Caco-2 (cell line): ENCODE measurements at regions of chr2 and their contacts with region 1.

Region 1: DNA sequence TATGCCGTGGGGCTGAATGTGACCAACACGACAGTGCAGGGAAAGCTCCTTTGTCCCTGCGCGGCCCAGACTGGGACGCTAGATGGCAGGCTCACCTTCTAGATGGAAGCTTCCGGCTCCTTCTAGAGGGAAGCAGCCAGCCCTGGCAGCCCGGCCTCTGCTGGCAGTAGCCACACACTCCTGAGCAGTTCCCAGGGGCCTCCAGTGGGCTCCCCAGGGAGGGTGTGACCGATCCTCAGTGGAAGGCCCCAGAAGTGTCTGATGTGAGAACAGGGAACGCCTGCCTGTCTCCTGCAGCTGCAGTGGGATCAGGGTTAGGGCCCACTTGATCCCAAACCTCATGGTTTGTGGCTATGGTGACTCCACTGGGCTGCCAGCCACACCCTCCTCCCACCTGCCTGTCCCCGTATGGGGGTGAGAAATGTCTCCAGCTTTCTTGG is 48.5 kb upstream of the LRPPRC start:
- DNase-seq: peak; percentile 91
- H3K4me3 ChIP-seq: no peak overlapping the region
- H3K4me3 Mint-ChIP-seq: no peak overlapping the region
- H3K27ac Mint-ChIP-seq: no peak overlapping the region
- H3K4me1 ChIP-seq: no peaks in the 10 kb centered on the region
- H3K4me1 Mint-ChIP-seq: no peaks in the 10 kb centered on the region
- H3K27me3 ChIP-seq: no peaks in the 10 kb centered on the region
- H3K27me3 Mint-ChIP-seq: no peaks in the 10 kb centered on the region
- CTCF ChIP-seq: peak; percentile 95 to 98

Region 2: DNA sequence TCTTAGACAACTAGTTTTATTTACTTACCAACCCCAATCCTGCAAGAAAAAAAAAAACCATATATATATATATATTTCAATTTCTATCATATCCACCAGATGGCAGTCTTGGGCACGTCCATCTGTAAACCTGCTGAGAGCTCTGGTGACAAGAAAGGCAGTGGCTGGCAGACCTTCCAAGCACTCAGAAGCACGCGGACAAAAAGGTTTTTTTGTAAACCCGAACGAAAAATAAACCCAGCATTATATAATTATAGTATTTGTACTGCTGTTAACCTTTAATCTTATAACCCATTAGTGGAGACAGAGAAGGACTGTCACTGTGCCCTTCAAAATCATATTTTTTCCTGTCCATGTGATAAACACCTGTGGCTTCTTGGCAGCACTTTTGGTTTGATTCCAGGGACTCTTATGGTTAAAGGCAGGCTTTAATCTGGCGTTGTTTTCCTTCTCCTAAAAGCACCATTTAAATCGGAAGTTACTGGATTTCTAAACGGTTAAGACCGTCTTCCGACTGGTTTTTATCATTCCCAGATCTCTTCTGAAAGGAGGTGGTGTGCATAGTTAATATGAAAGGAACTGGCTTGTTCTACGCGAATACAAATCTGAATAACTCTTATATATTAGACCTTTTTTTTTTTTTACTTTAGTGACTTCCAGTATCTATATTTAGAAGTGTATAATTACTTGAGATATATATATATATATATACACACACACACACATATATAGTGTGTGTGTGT is 200.0 kb after region 1 on chr2:
- CTCF ChIA-PET with region 1: interaction called, 14 read pairs
- POLR2A ChIA-PET with region 1: no interaction called
- intact Hi-C with region 1: loop called (anchors 1 kb)
- DNase-seq: peak; percentile 64 to 71
- H3K4me3 ChIP-seq: 0 out of 2 replicates have a peak overlapping the region, but pooled peaks have one; percentile 10
- H3K4me3 Mint-ChIP-seq: peak overlapping the region; percentile 61
- H3K27ac Mint-ChIP-seq: no peak overlapping the region
- H3K4me1 ChIP-seq: peaks cover 38% of the 10 kb centered on the region
- H3K4me1 Mint-ChIP-seq: peaks cover 28% of the 10 kb centered on the region
- H3K27me3 ChIP-seq: no peaks in the 10 kb centered on the region
- H3K27me3 Mint-ChIP-seq: no peaks in the 10 kb centered on the region
- CTCF ChIP-seq: peak; percentile 53 to 66

Region 3: GRCh38 chr2:44342854-44343253 is 298.6 kb after region 1 on chr2:
- CTCF ChIA-PET with region 1: interaction called, 7 read pairs
- POLR2A ChIA-PET with region 1: no interaction called
- intact Hi-C with region 1: loop called (anchors 1 kb)
- DNase-seq: peak in 1 of 2 experiments; percentile 43
- H3K4me3 ChIP-seq: no peak overlapping the region
- H3K4me3 Mint-ChIP-seq: no peak overlapping the region
- H3K27ac Mint-ChIP-seq: no peak overlapping the region
- H3K4me1 ChIP-seq: no peaks in the 10 kb centered on the region
- H3K4me1 Mint-ChIP-seq: no peaks in the 10 kb centered on the region
- H3K27me3 ChIP-seq: no peaks in the 10 kb centered on the region
- H3K27me3 Mint-ChIP-seq: no peaks in the 10 kb centered on the region
- CTCF ChIP-seq: peak; percentile 46 to 47

Region 4: GRCh38 chr2:44479122-44479887 is 435.0 kb after region 1 on chr2:
- CTCF ChIA-PET with region 1: interaction called, 20 read pairs
- POLR2A ChIA-PET with region 1: no interaction called
- intact Hi-C with region 1: loop called (anchors 1 kb)
- DNase-seq: peak; percentile 54 to 79
- H3K4me3 ChIP-seq: no peak overlapping the region
- H3K4me3 Mint-ChIP-seq: no peak overlapping the region
- H3K27ac Mint-ChIP-seq: no peak overlapping the region
- H3K4me1 ChIP-seq: no peaks in the 10 kb centered on the region
- H3K4me1 Mint-ChIP-seq: no peaks in the 10 kb centered on the region
- H3K27me3 ChIP-seq: no peaks in the 10 kb centered on the region
- H3K27me3 Mint-ChIP-seq: no peaks in the 10 kb centered on the region
- CTCF ChIP-seq: peak; percentile 99 to 100